Motor neuron (in vitro differentiated cells): ENCODE measurements at regions of chr9 and their contacts with region 1.

Region 1: GRCh38 chr9:126947529-126947928 is 32.9 kb downstream of the RALGPS1 start:
- ATAC-seq: no peak
- H3K4me3 ChIP-seq: no peak overlapping the region
- H3K27ac ChIP-seq: no peak overlapping the region
- H3K4me1 ChIP-seq: no peaks in the 10 kb centered on the region

Region 2: GRCh38 chr9:127199001-127199791 is 251.7 kb after region 1 on chr9:
- in situ Hi-C with region 1: loop called in 7 of 9 experiments (anchors 10 to 25 kb)
- ATAC-seq: peak; percentile 71 to 90 (median 83)
- H3K4me3 ChIP-seq: no peak overlapping the region
- H3K27ac ChIP-seq: no peak overlapping the region
- H3K4me1 ChIP-seq: no peaks in the 10 kb centered on the region

Region 3: GRCh38 chr9:127205183-127205470 is 257.6 kb after region 1 on chr9:
- in situ Hi-C with region 1: loop called in 4 of 9 experiments (anchors 10 to 25 kb)
- ATAC-seq: peak; percentile 4 to 79 (median 64)
- H3K4me3 ChIP-seq: no peak overlapping the region
- H3K27ac ChIP-seq: no peak overlapping the region
- H3K4me1 ChIP-seq: no peaks in the 10 kb centered on the region

Region 4: GRCh38 chr9:127224178-127224882 is 276.8 kb after region 1 on chr9:
- in situ Hi-C with region 1: loop called in 2 of 9 experiments (anchors 25 kb)
- ATAC-seq: peak; percentile 27 to 83 (median 55)
- H3K4me3 ChIP-seq: peak overlapping the region; percentile 53 to 76 (median 62)
- H3K27ac ChIP-seq: peak overlapping the region in 1 of 2 donors; percentile 71
- H3K4me1 ChIP-seq: peaks cover 3 to 5% of the 10 kb centered on the region in 2 donors

Region 5: GRCh38 chr9:127263664-127264063 is 316.1 kb after region 1 on chr9:
- in situ Hi-C with region 1: no loop called
- ATAC-seq: peak in 1 of 8 experiments; percentile 63
- H3K4me3 ChIP-seq: no peak overlapping the region
- H3K27ac ChIP-seq: no peak overlapping the region
- H3K4me1 ChIP-seq: peaks cover 5 to 19% of the 10 kb centered on the region in 2 donors

Region 6: DNA sequence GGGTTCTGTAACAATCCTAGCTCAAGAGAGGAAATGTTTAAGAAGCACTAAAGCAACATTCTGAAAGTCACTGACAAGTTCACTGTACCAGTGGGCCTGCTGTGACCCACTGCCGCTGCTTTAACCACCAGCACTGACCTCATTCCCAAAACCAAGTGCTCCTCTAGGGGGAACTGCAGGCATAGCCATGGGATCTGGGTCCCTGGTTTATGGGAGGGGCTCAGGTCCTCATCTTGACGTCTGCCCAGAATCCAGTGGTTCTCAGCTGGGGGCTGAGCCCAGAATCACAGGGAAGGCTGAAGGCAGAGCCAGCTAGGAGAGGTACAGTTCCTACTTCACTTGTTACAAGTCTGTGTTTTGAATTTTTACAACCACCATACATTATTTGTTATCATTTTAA is 413.3 kb after region 1 on chr9:
- in situ Hi-C with region 1: loop called in 1 of 9 experiments (anchors 25 kb)
- ATAC-seq: peak in 6 of 8 experiments; percentile 51 to 92 (median 80)
- H3K4me3 ChIP-seq: no peak overlapping the region
- H3K27ac ChIP-seq: no peak overlapping the region
- H3K4me1 ChIP-seq: peaks cover 0 to 8% of the 10 kb centered on the region in 2 donors